Naive thymus-derived CD4-positive, alpha-beta T cell (primary cell): ENCODE measurements at regions of chr14 and their contacts with region 1.

Region 1: DNA sequence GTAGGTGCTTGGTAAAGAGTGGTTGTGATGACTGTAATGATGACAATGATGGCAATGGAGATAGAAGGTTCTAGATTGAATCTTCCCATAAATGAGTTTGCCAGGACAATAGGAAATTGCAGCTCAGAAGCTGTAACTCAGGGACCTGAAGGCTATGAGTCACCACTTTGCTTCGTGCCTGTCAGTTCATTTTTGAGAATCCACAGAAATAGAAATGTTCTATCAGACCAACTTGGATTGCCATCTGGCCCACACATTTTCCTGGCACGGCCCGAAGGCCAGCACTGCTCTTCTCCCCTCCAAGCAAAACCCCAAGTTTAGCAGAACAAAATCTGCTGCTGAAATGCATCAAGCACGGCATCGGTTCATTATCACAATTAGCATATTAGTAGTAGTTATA is 1127.0 kb downstream of the BCL11B start:
- DNase-seq: no peak
- ATAC-seq: no peak
- H3K4me3 ChIP-seq: no peak overlapping the region
- H3K4me3 Mint-ChIP-seq: peak overlapping the region in 5 of 10 donors; percentile 1 to 60 (median 36)
- H3K27ac ChIP-seq: no peak overlapping the region
- H3K27ac Mint-ChIP-seq: peak overlapping the region in 8 of 9 donors; percentile 49 to 99 (median 90)
- H3K4me1 ChIP-seq: peaks cover 31 to 48% of the 10 kb centered on the region in 2 donors
- H3K4me1 Mint-ChIP-seq: peaks cover 38 to 86% (median 72%) of the 10 kb centered on the region in 7 donors
- H3K27me3 ChIP-seq: no peaks in the 10 kb centered on the region
- H3K27me3 Mint-ChIP-seq: no peaks in the 10 kb centered on the region

Region 2: GRCh38 chr14:97930166-97930565 is 214.8 kb before region 1 on chr14:
- CTCF ChIA-PET with region 1: no interaction called
- POLR2A ChIA-PET with region 1: no interaction called
- intact Hi-C with region 1: no loop called
- DNase-seq: no peak
- ATAC-seq: no peak
- H3K4me3 ChIP-seq: no peak overlapping the region
- H3K4me3 Mint-ChIP-seq: no peak overlapping the region
- H3K27ac ChIP-seq: no peak overlapping the region
- H3K27ac Mint-ChIP-seq: peak overlapping the region in 3 of 9 donors; percentile 10 to 75 (median 71)
- H3K4me1 ChIP-seq: no peaks in the 10 kb centered on the region
- H3K4me1 Mint-ChIP-seq: peaks cover 5 to 36% (median 29%) of the 10 kb centered on the region in 7 donors
- H3K27me3 ChIP-seq: no peaks in the 10 kb centered on the region
- H3K27me3 Mint-ChIP-seq: no peaks in the 10 kb centered on the region

Region 3: DNA sequence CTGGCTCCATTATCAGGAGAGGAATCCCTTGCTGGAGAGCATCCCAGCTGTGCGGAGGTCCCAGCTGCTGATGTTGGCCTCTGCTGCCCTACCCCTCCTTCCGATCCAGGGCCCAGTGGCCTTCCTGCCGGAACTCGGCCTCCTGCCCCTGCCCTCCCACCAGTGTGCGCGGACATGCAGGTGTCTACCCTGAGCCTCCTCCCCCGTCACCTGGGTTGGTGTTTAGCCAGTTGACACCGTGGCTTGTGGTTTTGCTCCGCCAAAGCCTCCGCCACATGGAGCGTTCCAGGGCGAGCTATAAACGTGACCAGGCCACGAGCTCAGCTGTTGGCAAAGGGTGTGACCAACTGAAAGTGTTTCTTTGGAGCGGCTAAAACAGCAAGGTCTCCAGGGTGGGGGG is 22.7 kb after region 1 on chr14:
- CTCF ChIA-PET with region 1: interaction called, 25 read pairs
- POLR2A ChIA-PET with region 1: interaction called, 265 read pairs
- intact Hi-C with region 1: loop called (anchors 2 kb)
- DNase-seq: peak in 3 of 9 donors; percentile 34 to 45 (median 39)
- ATAC-seq: peak; percentile 27
- H3K4me3 ChIP-seq: peak overlapping the region; percentile 39
- H3K4me3 Mint-ChIP-seq: peak overlapping the region; percentile 49 to 84 (median 73)
- H3K27ac ChIP-seq: peak overlapping the region; percentile 81
- H3K27ac Mint-ChIP-seq: peak overlapping the region; percentile 83 to 100 (median 97)
- H3K4me1 ChIP-seq: peaks cover 55 to 88% of the 10 kb centered on the region in 2 donors
- H3K4me1 Mint-ChIP-seq: peaks cover 48 to 100% (median 96%) of the 10 kb centered on the region in 7 donors
- H3K27me3 ChIP-seq: no peaks in the 10 kb centered on the region
- H3K27me3 Mint-ChIP-seq: no peaks in the 10 kb centered on the region

Region 4: GRCh38 chr14:98173305-98173704 is 28.3 kb after region 1 on chr14:
- CTCF ChIA-PET with region 1: interaction called, 25 read pairs
- POLR2A ChIA-PET with region 1: interaction called, 501 read pairs
- intact Hi-C with region 1: loop called (anchors 1 to 2 kb)
- DNase-seq: peak in 7 of 9 donors; percentile 71 to 84 (median 82)
- ATAC-seq: peak; percentile 78
- H3K4me3 ChIP-seq: peak overlapping the region; percentile 33
- H3K4me3 Mint-ChIP-seq: peak overlapping the region; percentile 74 to 90 (median 84)
- H3K27ac ChIP-seq: peak overlapping the region; percentile 81
- H3K27ac Mint-ChIP-seq: peak overlapping the region; percentile 89 to 100 (median 97)
- H3K4me1 ChIP-seq: peaks cover 100% of the 10 kb centered on the region in 2 donors
- H3K4me1 Mint-ChIP-seq: peaks cover 59 to 100% (median 99%) of the 10 kb centered on the region in 7 donors
- H3K27me3 ChIP-seq: no peaks in the 10 kb centered on the region
- H3K27me3 Mint-ChIP-seq: no peaks in the 10 kb centered on the region